ENCODE measurements at regions of chr1 and their contacts with region 1.

Region 1: DNA sequence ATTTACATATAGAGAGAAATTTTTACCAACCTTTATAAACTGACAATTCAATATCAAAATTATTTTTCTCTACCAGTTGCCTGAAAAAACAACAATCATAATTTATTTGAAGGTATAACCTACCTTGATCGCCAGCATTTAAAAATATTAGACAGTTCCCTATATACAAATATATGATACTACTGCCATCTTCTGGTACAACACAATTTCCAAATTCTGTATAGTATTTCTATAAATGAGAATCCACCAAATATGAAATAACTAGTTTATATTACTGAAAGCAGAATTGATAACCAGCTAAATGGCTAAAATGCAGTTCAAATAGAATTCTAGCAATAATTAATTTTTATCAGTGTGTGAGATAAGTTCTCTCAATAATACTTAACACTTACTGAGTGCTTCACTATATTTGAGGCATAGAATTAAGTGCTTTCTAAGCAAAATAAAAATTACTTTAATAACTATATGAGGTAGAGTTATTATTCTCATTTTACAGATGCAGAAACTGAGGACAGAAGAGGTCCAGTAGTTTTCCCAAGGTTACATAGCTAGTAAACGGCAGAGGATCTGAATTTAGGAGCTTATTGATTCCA is 75.6 kb downstream of the PIGK start:
- DNase-seq: peak; percentile 1
- ATAC-seq: no peak
- H3K4me3 ChIP-seq: no peak overlapping the region
- H3K27ac ChIP-seq: no peak overlapping the region
- H3K4me1 ChIP-seq: no peaks in the 10 kb centered on the region
- H3K27me3 ChIP-seq: no peaks in the 10 kb centered on the region
- CTCF ChIP-seq: peak; percentile 45
- POLR2A ChIP-seq: no peak
- RAD21 ChIP-seq: peak; percentile 43

Region 2: GRCh38 chr1:75908717-75909152 is 1234.9 kb before region 1 on chr1:
- CTCF ChIA-PET with region 1: no interaction called
- POLR2A ChIA-PET with region 1: no interaction called
- dilution Hi-C with region 1: no loop called
- in situ Hi-C with region 1: no loop called
- intact Hi-C with region 1: loop called (anchors 2 kb)
- DNase-seq: peak; percentile 50
- ATAC-seq: peak; percentile 91
- H3K4me3 ChIP-seq: no peak overlapping the region
- H3K27ac ChIP-seq: no peak overlapping the region
- H3K4me1 ChIP-seq: no peaks in the 10 kb centered on the region
- H3K27me3 ChIP-seq: no peaks in the 10 kb centered on the region
- CTCF ChIP-seq: peak; percentile 64
- POLR2A ChIP-seq: no peak
- RAD21 ChIP-seq: peak; percentile 68

Region 3: DNA sequence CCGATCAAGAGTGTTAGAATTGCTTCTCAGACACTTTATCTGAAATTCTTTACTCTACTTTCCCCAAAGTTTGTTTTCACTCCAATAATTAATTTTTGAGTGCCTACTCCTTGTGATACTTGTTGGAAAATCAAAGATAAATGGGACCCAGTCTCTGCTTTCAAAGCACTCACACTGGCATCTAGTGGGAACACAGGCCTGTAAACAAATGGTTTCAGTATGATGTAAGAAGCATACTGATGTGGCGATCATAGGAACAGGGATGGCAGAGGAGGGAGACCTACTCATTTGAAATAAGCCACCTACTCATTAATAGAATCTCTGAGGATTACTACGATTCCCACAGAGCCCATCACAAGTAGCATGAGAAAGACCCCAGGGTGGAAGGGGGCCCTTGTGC is 550.0 kb before region 1 on chr1:
- CTCF ChIA-PET with region 1: no interaction called
- POLR2A ChIA-PET with region 1: no interaction called
- dilution Hi-C with region 1: no loop called
- in situ Hi-C with region 1: no loop called
- intact Hi-C with region 1: no loop called
- DNase-seq: no peak
- ATAC-seq: no peak; the same call in 1 of the 2 replicates
- H3K4me3 ChIP-seq: no peak overlapping the region
- H3K27ac ChIP-seq: no peak overlapping the region
- H3K4me1 ChIP-seq: no peaks in the 10 kb centered on the region
- H3K27me3 ChIP-seq: no peaks in the 10 kb centered on the region
- CTCF ChIP-seq: no peak
- POLR2A ChIP-seq: no peak
- RAD21 ChIP-seq: no peak

Region 4: DNA sequence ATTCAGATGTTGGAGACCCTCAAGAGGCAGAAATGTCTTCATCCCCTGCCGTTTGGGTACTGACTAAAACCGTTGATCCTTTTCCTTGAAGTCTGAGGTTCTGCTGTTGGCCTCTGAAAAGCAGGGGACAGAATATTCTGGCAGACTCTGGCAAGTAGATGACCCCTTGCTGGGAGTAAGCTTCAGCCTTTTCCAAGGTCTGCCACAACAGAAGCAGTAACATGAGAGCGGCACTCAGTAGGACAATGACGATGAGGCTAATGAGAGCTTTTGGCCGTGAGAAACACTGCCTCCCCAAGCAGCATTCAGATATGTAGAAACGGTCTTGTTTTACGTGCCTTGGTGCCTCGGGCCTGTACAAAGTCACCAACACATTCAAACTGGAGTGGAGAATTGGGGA is 132.7 kb before region 1 on chr1:
- CTCF ChIA-PET with region 1: no interaction called
- POLR2A ChIA-PET with region 1: no interaction called
- dilution Hi-C with region 1: no loop called
- in situ Hi-C with region 1: no loop called
- intact Hi-C with region 1: no loop called
- DNase-seq: no peak
- ATAC-seq: no peak
- H3K4me3 ChIP-seq: no peak overlapping the region
- H3K27ac ChIP-seq: no peak overlapping the region
- H3K4me1 ChIP-seq: no peaks in the 10 kb centered on the region
- H3K27me3 ChIP-seq: peaks cover 11% of the 10 kb centered on the region
- CTCF ChIP-seq: no peak
- POLR2A ChIP-seq: no peak
- RAD21 ChIP-seq: no peak

Region 5: GRCh38 chr1:77081834-77082233 is 61.8 kb before region 1 on chr1:
- CTCF ChIA-PET with region 1: no interaction called
- POLR2A ChIA-PET with region 1: no interaction called
- dilution Hi-C with region 1: no loop called
- in situ Hi-C with region 1: no loop called
- intact Hi-C with region 1: no loop called
- DNase-seq: no peak
- ATAC-seq: no peak
- H3K4me3 ChIP-seq: no peak overlapping the region
- H3K27ac ChIP-seq: no peak overlapping the region
- H3K4me1 ChIP-seq: no peaks in the 10 kb centered on the region
- H3K27me3 ChIP-seq: no peaks in the 10 kb centered on the region; the same call in 1 of the 2 replicates
- CTCF ChIP-seq: no peak
- POLR2A ChIP-seq: no peak
- RAD21 ChIP-seq: no peak

Region 6: DNA sequence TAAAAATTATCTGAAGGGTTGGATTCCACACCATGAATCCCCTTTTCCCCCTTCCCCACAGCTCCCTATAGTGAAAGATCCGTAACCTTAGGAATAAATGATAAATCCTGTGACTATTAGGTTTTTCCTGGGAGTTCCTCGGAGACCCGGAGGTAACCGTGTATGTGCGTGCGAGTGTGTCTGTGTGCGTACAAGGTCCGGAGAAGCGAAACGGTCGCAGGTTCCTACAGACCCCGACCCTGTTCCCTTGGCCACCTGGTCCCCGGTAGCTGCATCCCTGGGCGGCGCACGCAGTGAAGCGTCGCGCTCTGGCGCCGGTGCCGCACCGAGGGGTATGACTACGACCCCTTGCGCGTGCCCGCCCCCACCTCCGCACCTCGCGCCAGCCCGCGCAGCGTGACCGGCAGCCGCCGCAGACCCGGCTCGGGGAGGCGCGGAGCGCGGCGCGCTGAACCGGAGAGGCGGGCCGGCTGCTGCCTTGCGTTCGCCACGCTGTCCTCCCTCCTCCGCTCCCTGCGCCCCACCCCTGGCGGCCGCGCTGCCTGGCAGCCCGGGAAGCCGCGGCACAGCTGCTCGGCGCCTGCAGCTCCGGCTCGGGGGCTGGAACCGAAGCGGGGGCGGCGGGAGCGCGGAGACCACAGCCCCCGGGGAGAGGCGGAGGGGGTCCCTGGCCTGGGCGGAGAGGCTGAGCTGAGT is 138.0 kb after region 1 on chr1 and contains the start of gene AK5:
- CTCF ChIA-PET with region 1: no interaction called
- POLR2A ChIA-PET with region 1: no interaction called
- dilution Hi-C with region 1: no loop called
- in situ Hi-C with region 1: no loop called
- intact Hi-C with region 1: loop called (anchors 5 kb)
- DNase-seq: peak; percentile 48
- ATAC-seq: peak; percentile 92
- H3K4me3 ChIP-seq: peak within 1 kb of the TSS; percentile 91
- H3K27ac ChIP-seq: peak within 1 kb of the TSS; percentile 56
- H3K4me1 ChIP-seq: 0 out of 2 replicates have a peak, but pooled peaks cover 2% of the 10 kb centered on the region
- H3K27me3 ChIP-seq: no peaks in the 10 kb centered on the region
- CTCF ChIP-seq: no peak
- POLR2A ChIP-seq: no peak
- RAD21 ChIP-seq: no peak
- total RNA-seq, gene AK5: 25.8 and 54.7 TPM in 2 replicates

Region 7: GRCh38 chr1:77382366-77382765 is 238.7 kb after region 1 on chr1:
- CTCF ChIA-PET with region 1: no interaction called
- POLR2A ChIA-PET with region 1: no interaction called
- dilution Hi-C with region 1: no loop called
- in situ Hi-C with region 1: no loop called
- intact Hi-C with region 1: no loop called
- DNase-seq: peak; percentile 66
- ATAC-seq: no peak
- H3K4me3 ChIP-seq: no peak overlapping the region
- H3K27ac ChIP-seq: no peak overlapping the region
- H3K4me1 ChIP-seq: peaks cover 14% of the 10 kb centered on the region
- H3K27me3 ChIP-seq: no peaks in the 10 kb centered on the region
- CTCF ChIP-seq: no peak
- POLR2A ChIP-seq: no peak
- RAD21 ChIP-seq: no peak

Region 8: GRCh38 chr1:77900687-77901293 is 757.2 kb after region 1 on chr1:
- CTCF ChIA-PET with region 1: no interaction called
- POLR2A ChIA-PET with region 1: no interaction called
- dilution Hi-C with region 1: no loop called
- in situ Hi-C with region 1: no loop called
- intact Hi-C with region 1: loop called (anchors 10 kb)
- DNase-seq: peak; percentile 63
- ATAC-seq: peak; percentile 66
- H3K4me3 ChIP-seq: no peak overlapping the region
- H3K27ac ChIP-seq: no peak overlapping the region
- H3K4me1 ChIP-seq: peaks cover 2% of the 10 kb centered on the region
- H3K27me3 ChIP-seq: no peaks in the 10 kb centered on the region
- CTCF ChIP-seq: peak; percentile 60
- POLR2A ChIP-seq: no peak
- RAD21 ChIP-seq: peak; percentile 68